ENCODE measurements at regions of chr14 and their contacts with region 1.

Region 1: DNA sequence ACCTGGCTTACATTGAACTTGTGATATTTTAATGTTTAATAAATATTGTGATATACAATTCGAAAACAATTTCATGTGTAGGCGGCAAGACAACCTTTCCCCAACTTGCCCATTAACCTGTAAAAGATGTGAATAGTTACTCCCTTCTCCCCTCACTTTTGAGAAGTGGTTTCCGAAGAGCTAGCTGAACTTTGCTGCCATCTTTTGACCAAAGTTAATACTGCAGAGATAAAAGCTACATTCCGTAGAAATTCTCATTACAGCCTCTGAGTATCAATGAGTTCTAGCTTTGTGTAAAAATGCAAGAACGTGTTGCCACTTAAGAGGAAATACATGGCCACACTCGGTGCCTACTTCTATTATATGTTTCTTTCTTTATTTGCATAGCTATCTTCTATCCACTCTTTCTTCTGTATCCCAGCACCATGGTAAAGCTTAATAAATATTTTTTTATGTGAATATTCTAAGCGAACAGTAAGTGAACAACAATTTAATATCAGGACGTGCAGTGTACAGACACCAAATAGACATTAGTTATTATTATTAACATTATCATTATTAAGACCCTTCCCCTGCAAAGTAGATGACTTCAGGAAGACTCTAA is 105.1 kb upstream of the TMEM260 start:
- DNase-seq: peak; percentile 12 to 53 (median 28)
- H3K4me3 ChIP-seq: no peak overlapping the region
- H3K4me3 Mint-ChIP-seq: no peak overlapping the region
- H3K27ac ChIP-seq: no peak overlapping the region
- H3K27ac Mint-ChIP-seq: no peak overlapping the region
- H3K4me1 ChIP-seq: no peaks in the 10 kb centered on the region
- H3K4me1 Mint-ChIP-seq: no peaks in the 10 kb centered on the region
- H3K27me3 ChIP-seq: no peaks in the 10 kb centered on the region
- H3K27me3 Mint-ChIP-seq: peaks cover 0 to 6% (median 0%) of the 10 kb centered on the region in 3 donors
- CTCF ChIP-seq: peak; percentile 85

Region 2: GRCh38 chr14:55446218-55446654 is 1028.3 kb before region 1 on chr14:
- intact Hi-C with region 1: loop called (anchors 5 kb)
- DNase-seq: peak; percentile 38 to 61 (median 49)
- H3K4me3 ChIP-seq: no peak overlapping the region
- H3K4me3 Mint-ChIP-seq: no peak overlapping the region
- H3K27ac ChIP-seq: no peak overlapping the region
- H3K27ac Mint-ChIP-seq: no peak overlapping the region
- H3K4me1 ChIP-seq: peaks cover 9 to 10% of the 10 kb centered on the region in 2 donors
- H3K4me1 Mint-ChIP-seq: peaks cover 12% of the 10 kb centered on the region
- H3K27me3 ChIP-seq: no peaks in the 10 kb centered on the region
- H3K27me3 Mint-ChIP-seq: peaks cover 0 to 3% (median 0%) of the 10 kb centered on the region in 3 donors
- CTCF ChIP-seq: peak; percentile 82

Region 3: DNA sequence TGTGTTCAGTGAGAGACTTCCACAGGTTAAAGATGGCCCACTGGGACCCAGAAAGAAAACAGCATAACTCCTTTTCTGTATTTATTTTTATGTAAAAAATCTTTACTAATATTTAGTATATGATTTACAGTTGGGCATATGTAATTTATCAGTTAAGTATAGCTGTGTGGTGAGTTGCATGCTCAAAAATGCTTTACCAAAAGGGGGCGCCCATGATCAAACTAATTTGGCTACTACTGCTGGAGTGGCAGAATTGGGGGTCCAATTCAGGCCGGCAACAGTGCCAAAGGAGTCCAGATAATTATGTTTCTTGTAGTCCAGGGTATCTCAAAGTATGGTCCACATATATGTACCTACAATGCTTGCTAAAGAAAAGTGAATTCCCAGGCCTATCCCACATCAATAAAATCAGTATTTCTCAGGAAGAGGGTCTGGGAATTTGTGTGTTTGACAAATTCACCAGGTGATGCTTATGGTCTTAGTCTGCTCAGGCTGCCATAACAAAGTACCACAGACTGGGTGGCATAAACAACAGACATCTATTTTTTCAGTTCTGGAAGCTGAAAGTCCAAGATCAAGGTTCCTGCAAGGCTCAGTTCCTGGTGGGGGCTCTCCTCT is 742.5 kb before region 1 on chr14:
- intact Hi-C with region 1: loop called in 1 of 2 experiments (anchors 10 kb)
- DNase-seq: peak; percentile 13 to 30 (median 29)
- H3K4me3 ChIP-seq: no peak overlapping the region
- H3K4me3 Mint-ChIP-seq: no peak overlapping the region
- H3K27ac ChIP-seq: no peak overlapping the region
- H3K27ac Mint-ChIP-seq: no peak overlapping the region
- H3K4me1 ChIP-seq: peaks cover 3 to 7% of the 10 kb centered on the region in 2 donors
- H3K4me1 Mint-ChIP-seq: peaks cover 4% of the 10 kb centered on the region
- H3K27me3 ChIP-seq: no peaks in the 10 kb centered on the region
- H3K27me3 Mint-ChIP-seq: peaks cover 0 to 2% (median 0%) of the 10 kb centered on the region in 3 donors
- CTCF ChIP-seq: peak; percentile 83

Region 4: DNA sequence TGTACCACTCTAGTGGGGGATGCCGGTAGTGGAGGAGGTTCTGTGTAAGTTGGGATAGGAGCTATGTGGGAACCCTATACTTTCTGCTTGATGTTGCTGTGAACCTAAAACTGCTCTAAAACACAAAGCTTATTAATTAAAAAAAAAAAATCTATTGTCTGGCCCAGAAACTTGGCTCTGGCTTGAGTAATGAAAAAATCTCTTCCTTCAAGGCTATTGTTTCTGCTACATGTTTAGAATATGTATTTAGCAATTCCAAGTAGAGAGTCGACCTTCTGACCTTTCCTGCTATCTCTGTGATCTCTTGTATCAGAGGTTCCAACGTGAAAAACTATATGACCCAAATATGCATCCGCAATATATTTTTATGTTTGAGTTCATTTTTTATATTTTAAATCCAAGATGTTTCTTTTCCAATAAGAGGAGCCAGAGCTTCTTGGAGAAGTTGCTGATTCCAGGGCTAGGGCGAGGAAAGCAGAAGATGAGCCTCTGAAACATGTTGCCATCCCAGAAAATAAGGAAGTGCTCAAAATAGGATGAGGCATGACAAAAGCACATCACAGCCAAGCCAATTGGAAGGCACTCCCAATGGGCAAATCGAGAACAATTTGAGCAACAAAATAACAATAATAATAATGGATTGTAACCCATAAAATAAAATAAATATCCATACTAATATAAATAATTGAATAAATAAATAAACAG is 79.5 kb before region 1 on chr14:
- intact Hi-C with region 1: no loop called
- DNase-seq: peak; percentile 9 to 30 (median 26)
- H3K4me3 ChIP-seq: no peak overlapping the region
- H3K4me3 Mint-ChIP-seq: no peak overlapping the region
- H3K27ac ChIP-seq: no peak overlapping the region
- H3K27ac Mint-ChIP-seq: peak overlapping the region in 1 of 7 donors; percentile 70
- H3K4me1 ChIP-seq: peaks cover 3 to 5% of the 10 kb centered on the region in 2 donors
- H3K4me1 Mint-ChIP-seq: peaks cover 11% of the 10 kb centered on the region
- H3K27me3 ChIP-seq: no peaks in the 10 kb centered on the region
- H3K27me3 Mint-ChIP-seq: peaks cover 0 to 3% (median 0%) of the 10 kb centered on the region in 3 donors
- CTCF ChIP-seq: no peak

Region 5: GRCh38 chr14:56592746-56593544 is 118.4 kb after region 1 on chr14:
- intact Hi-C with region 1: no loop called
- DNase-seq: no peak
- H3K4me3 ChIP-seq: no peak overlapping the region
- H3K4me3 Mint-ChIP-seq: no peak overlapping the region
- H3K27ac ChIP-seq: no peak overlapping the region
- H3K27ac Mint-ChIP-seq: no peak overlapping the region
- H3K4me1 ChIP-seq: no peaks in the 10 kb centered on the region
- H3K4me1 Mint-ChIP-seq: no peaks in the 10 kb centered on the region
- H3K27me3 ChIP-seq: no peaks in the 10 kb centered on the region
- H3K27me3 Mint-ChIP-seq: no peaks in the 10 kb centered on the region
- CTCF ChIP-seq: no peak